Endothelial cell of umbilical vein (primary cell): ENCODE measurements at regions of chr4 and their contacts with region 1.

Region 1: DNA sequence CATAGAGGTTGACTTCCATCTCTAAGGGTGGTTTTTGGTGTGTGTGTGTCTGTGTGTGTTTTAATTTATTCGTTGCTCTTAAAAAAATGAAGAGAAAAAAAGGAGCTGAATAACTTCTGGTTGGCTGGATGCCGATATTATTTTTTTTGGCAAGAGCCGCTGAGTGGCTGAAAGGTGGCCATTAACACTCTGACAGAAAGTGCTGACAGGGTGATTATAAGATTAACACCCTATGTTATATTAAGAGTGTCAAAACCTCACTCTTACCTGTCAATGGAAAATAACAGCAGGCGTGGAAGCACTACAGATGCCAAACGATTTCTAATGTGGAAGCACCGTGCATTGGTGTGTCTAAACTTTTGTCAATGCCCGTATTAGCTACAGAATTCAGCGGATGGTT is 622.5 kb downstream of the ANKRD50 start:
- DNase-seq: peak; percentile 21
- H3K4me3 ChIP-seq: no peak overlapping the region
- H3K27ac ChIP-seq: no peak overlapping the region
- H3K4me1 ChIP-seq: no peaks in the 10 kb centered on the region
- H3K27me3 ChIP-seq: no peaks in the 10 kb centered on the region
- CTCF ChIP-seq: no peak
- POLR2A ChIP-seq: no peak

Region 2: GRCh38 chr4:123922847-123923246 is 167.2 kb before region 1 on chr4:
- CTCF ChIA-PET with region 1: no interaction called
- POLR2A ChIA-PET with region 1: no interaction called
- dilution Hi-C with region 1: no loop called
- intact Hi-C with region 1: no loop called
- DNase-seq: peak; percentile 91
- H3K4me3 ChIP-seq: no peak overlapping the region
- H3K27ac ChIP-seq: peak overlapping the region; percentile 93
- H3K4me1 ChIP-seq: peaks cover 20% of the 10 kb centered on the region
- H3K27me3 ChIP-seq: no peaks in the 10 kb centered on the region
- CTCF ChIP-seq: no peak
- POLR2A ChIP-seq: peak; percentile 78

Region 3: GRCh38 chr4:124199755-124200154 is 109.7 kb after region 1 on chr4:
- CTCF ChIA-PET with region 1: no interaction called
- POLR2A ChIA-PET with region 1: interaction called, 13 read pairs
- dilution Hi-C with region 1: no loop called
- intact Hi-C with region 1: no loop called
- DNase-seq: peak; percentile 89
- H3K4me3 ChIP-seq: peak overlapping the region in 1 of 3 experiments; percentile 46
- H3K27ac ChIP-seq: no peak overlapping the region
- H3K4me1 ChIP-seq: peaks cover 30% of the 10 kb centered on the region
- H3K27me3 ChIP-seq: no peaks in the 10 kb centered on the region
- CTCF ChIP-seq: no peak
- POLR2A ChIP-seq: peak; percentile 36